ENCODE measurements at regions of chr19 and their contacts with region 1.

Region 1: GRCh38 chr19:6021878-6022569 is 44.1 kb upstream of the RANBP3 start:
- DNase-seq: peak; percentile 92
- H3K4me3 ChIP-seq: peak overlapping the region in 1 of 2 experiments; percentile 39; a peak in 1 of 4 replicates
- H3K27ac ChIP-seq: peak overlapping the region in 1 of 2 experiments; percentile 85; a peak in 1 of 4 replicates
- H3K4me1 ChIP-seq: peaks cover 6 to 10% of the 10 kb centered on the region in 2 experiments; a peak in 3 of 4 replicates
- H3K27me3 ChIP-seq: no peaks in the 10 kb centered on the region
- CTCF ChIP-seq: peak; percentile 74
- EP300 ChIP-seq: no peak
- RAD21 ChIP-seq: peak; percentile 94

Region 2: GRCh38 chr19:5790573-5791520 is 231.2 kb before region 1 on chr19 and contains the start of gene DUS3L:
- CTCF ChIA-PET with region 1: interaction called, 12 read pairs
- POLR2A ChIA-PET with region 1: no interaction called
- DNase-seq: peak; percentile 97
- H3K4me3 ChIP-seq: peak within 1 kb of the TSS; percentile 73 to 97
- H3K27ac ChIP-seq: peak within 1 kb of the TSS; percentile 90 to 95
- H3K4me1 ChIP-seq: peaks cover 0 to 8% of the 10 kb centered on the region in 2 experiments; a peak in 1 of 4 replicates
- H3K27me3 ChIP-seq: no peaks in the 10 kb centered on the region
- CTCF ChIP-seq: no peak
- EP300 ChIP-seq: no peak
- RAD21 ChIP-seq: no peak
- polyA plus RNA-seq, gene DUS3L: 44.0 and 45.2 TPM in 2 replicates

Region 3: DNA sequence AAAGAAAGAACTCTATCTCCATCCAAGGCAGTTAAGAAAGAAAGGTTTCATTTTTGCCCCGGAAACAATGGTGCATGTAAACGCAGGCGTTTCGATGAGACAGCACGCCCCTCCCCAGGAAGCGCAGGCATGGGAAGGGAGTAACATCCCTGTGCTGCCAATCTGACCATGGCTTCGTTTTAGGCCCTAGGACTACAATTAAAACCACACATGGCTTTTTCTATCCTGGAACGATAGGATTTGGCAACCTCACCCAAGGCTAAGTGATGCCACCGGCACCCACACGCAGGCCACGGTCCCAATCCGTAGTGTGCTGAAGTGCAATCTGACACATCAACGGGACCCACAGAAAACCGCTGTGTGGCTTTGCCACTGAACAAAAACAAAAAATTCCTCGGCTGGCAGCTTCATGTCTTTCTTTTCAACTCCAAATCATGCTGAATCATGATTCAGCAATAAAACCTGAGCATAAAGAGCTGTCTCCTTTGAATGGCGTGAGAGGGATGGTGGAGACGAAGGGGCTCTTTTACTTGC is 68.3 kb before region 1 on chr19:
- CTCF ChIA-PET with region 1: interaction called, 11 read pairs
- POLR2A ChIA-PET with region 1: no interaction called
- DNase-seq: no peak
- H3K4me3 ChIP-seq: no peak overlapping the region
- H3K27ac ChIP-seq: peak overlapping the region; percentile 53 to 96; a peak in 3 of 4 replicates
- H3K4me1 ChIP-seq: peaks cover 31 to 78% of the 10 kb centered on the region in 2 experiments
- H3K27me3 ChIP-seq: no peaks in the 10 kb centered on the region
- CTCF ChIP-seq: no peak
- EP300 ChIP-seq: no peak
- RAD21 ChIP-seq: no peak

Region 4: DNA sequence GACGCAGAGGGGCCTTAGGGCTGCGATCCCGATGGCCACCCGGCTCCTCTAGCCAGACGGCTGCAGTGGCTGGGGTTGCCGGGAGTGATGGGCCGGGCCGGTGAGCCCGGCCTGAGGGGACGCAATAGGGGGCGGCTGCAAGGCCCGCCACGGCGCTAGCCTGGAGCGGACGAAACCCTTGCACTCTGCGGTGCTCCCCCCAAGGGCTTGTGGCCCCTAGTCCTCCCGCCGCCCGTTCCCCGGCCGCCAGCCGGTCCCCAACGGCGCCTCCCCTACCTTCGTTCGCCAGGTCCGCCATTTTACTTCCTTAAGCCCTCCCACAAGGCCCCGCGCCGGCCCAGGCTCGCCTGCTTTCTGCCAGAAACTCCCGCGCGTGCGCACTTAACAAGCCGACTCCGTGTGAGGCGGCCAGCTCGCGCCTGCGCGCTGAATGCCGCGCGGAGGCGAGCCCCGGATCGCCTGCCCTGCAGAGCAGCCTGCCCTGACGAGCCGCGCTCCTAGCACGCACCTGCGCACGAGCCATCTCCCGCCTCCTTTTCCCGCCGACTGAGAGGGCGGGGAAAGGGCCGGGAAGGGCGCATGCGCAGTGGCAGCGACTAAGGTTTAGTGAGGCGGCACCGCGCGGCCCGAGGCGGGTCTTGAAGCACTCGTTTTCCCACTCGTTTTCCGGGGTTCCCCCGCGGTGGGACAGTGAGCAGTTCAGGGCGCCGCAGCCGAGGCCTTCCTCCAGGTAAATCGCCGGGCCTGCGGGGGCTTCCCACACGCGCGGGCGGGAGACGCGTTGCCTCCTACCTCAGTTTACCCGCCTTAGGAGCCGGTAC is 44.0 kb before region 1 on chr19 and contains the start of gene RANBP3:
- CTCF ChIA-PET with region 1: interaction called, 448 read pairs
- POLR2A ChIA-PET with region 1: no interaction called
- DNase-seq: peak; percentile 100
- H3K4me3 ChIP-seq: peak within 1 kb of the TSS; percentile 81 to 90
- H3K27ac ChIP-seq: peak within 1 kb of the TSS; percentile 70 to 83; a peak in 3 of 4 replicates
- H3K4me1 ChIP-seq: peaks cover 10 to 17% of the 10 kb centered on the region in 2 experiments; a peak in 3 of 4 replicates
- H3K27me3 ChIP-seq: no peaks in the 10 kb centered on the region
- CTCF ChIP-seq: no peak
- EP300 ChIP-seq: no peak; a peak in 1 of 4 replicates
- RAD21 ChIP-seq: no peak; the same call in 1 of the 2 replicates
- polyA plus RNA-seq, gene RANBP3: 71.8 and 84.0 TPM in 2 replicates

Region 5: DNA sequence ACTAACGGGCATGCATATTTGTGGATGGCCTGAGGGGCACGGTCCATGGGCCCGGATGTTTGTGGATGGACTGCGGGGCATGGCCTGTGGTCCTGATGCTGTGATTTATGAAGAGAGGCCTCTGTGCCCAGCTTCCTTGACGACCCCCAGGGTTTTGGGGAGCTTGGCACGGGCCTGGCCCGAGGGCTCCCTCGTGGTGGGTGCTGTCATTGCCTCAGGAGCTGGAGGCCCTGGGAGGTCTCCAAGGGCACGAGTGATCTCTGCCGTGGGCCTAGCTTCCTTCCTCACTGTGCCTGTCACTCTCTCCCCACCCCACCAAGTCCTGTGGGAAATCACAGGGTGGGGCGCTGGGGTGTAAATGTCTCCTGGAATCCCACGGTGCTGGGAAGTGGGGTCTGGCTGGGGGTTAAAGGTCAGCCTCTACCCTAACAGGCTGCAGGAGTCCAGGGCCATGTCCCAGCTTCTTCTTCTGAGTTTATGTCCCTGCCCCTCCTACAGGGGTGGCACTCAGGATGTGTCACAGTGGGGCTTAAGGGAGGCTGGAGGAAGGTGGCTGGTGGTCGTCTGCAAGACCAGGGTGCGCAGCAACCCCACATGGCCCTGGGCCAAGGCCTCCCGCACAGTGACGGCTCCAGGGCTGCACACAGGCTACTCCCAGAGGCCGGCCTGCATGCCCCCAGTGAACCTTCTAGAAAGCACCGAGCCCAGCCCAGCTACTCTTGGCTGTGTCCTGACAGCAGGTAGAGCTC is 16.5 kb before region 1 on chr19:
- CTCF ChIA-PET with region 1: interaction called, 102 read pairs
- POLR2A ChIA-PET with region 1: no interaction called
- DNase-seq: peak; percentile 20
- H3K4me3 ChIP-seq: no peak overlapping the region
- H3K27ac ChIP-seq: no peak overlapping the region
- H3K4me1 ChIP-seq: no peaks in the 10 kb centered on the region
- H3K27me3 ChIP-seq: no peaks in the 10 kb centered on the region
- CTCF ChIP-seq: no peak
- EP300 ChIP-seq: no peak
- RAD21 ChIP-seq: no peak

Region 6: DNA sequence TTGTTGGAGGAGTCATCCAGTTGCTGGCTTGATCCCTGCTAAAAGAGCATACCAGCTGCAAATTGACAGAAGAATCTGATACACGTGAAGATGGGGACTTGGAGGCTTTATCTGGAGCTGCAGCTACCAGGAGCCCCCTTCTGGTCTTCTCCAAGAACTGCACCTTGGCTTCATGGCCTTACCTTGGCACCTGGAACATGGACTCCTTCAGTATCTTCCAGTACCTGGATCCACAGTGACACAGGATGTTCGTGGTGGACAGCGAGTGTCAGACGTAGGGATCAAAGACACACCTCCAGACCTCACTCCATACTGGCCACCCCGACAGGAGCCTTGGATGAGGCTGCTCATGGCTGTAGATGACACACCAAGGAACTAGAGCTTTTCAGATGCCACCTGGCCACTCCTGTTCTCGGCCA is 103.6 kb after region 1 on chr19:
- CTCF ChIA-PET with region 1: interaction called, 17 read pairs
- POLR2A ChIA-PET with region 1: no interaction called
- DNase-seq: peak; percentile 66
- H3K4me3 ChIP-seq: no peak overlapping the region
- H3K27ac ChIP-seq: no peak overlapping the region
- H3K4me1 ChIP-seq: no peaks in the 10 kb centered on the region
- H3K27me3 ChIP-seq: no peaks in the 10 kb centered on the region
- CTCF ChIP-seq: peak; percentile 96
- EP300 ChIP-seq: no peak
- RAD21 ChIP-seq: peak; percentile 86

Region 7: GRCh38 chr19:6161271-6161850 is 139.3 kb after region 1 on chr19:
- CTCF ChIA-PET with region 1: no interaction called
- POLR2A ChIA-PET with region 1: no interaction called
- DNase-seq: peak; percentile 13
- H3K4me3 ChIP-seq: no peak overlapping the region
- H3K27ac ChIP-seq: no peak overlapping the region
- H3K4me1 ChIP-seq: no peaks in the 10 kb centered on the region
- H3K27me3 ChIP-seq: no peaks in the 10 kb centered on the region
- CTCF ChIP-seq: no peak
- EP300 ChIP-seq: no peak
- RAD21 ChIP-seq: no peak